RWPE1 (cell line): ENCODE measurements at regions of chr2 and their contacts with region 1.

Region 1: GRCh38 chr2:235675678-235676535 is 182.1 kb downstream of the AGAP1 start:
- DNase-seq: peak; percentile 6
- H3K27ac ChIP-seq: no peak overlapping the region
- CTCF ChIP-seq: no peak

Region 2: GRCh38 chr2:235746257-235747084 is 70.6 kb after region 1 on chr2:
- CTCF ChIA-PET with region 1: interaction called, 10 read pairs
- POLR2A ChIA-PET with region 1: no interaction called
- DNase-seq: peak; percentile 79
- H3K27ac ChIP-seq: peak overlapping the region; percentile 87
- CTCF ChIP-seq: peak; percentile 77